Gastrocnemius medialis (tissue), 4 donors: ENCODE measurements at regions of chr4 and their contacts with region 1.

Region 1: DNA sequence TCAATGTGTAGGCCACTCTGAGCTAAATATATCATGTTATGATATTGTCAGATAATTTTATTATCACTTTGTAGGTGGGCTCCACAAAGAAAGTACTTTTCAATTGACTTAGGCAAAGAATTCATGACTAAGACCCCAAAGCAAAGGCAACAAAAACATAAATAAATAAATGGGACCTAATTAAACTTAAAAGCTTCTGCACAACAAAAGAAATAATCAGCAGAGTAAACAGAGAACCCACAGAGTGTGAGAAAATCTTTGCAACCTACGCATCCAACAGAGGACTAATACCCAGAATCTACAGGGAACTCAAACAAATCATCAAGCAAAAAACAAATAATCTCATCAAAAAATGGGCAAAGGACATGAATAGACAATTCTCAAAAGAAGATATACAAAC is 15.2 kb upstream of the PDLIM5 start:
- DNase-seq: no peak
- ATAC-seq: no peak
- H3K4me3 ChIP-seq: no peak overlapping the region
- H3K27ac ChIP-seq: no peak overlapping the region
- H3K4me1 ChIP-seq: peaks cover 0 to 1% of the 10 kb centered on the region in 2 donors
- H3K27me3 ChIP-seq: no peaks in the 10 kb centered on the region
- CTCF ChIP-seq: no peak
- POLR2A ChIP-seq: no peak

Region 2: DNA sequence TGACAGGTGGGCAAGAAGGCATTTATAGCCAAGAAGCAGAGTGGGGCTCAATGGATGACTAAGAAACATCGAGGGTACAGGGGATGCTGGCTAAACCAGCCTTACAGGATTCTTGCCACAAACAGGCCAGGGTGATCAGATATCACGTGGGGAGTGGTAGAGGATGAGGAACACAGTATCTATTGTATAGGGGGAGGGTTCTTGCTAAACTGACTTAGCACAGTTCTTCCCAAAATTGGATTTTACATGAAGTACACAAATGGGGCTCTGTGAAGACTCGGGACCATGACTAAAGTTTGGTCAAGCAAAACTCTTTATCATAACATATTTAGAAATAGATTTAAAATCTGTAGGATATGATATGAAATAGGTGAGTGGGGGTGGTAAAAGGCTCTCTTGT is 751.9 kb before region 1 on chr4:
- in situ Hi-C with region 1: no loop called
- intact Hi-C with region 1: no loop called
- DNase-seq: no peak
- ATAC-seq: no peak
- H3K4me3 ChIP-seq: no peak overlapping the region
- H3K27ac ChIP-seq: no peak overlapping the region
- H3K4me1 ChIP-seq: no peaks in the 10 kb centered on the region
- H3K27me3 ChIP-seq: no peaks in the 10 kb centered on the region
- CTCF ChIP-seq: no peak
- POLR2A ChIP-seq: no peak

Region 3: DNA sequence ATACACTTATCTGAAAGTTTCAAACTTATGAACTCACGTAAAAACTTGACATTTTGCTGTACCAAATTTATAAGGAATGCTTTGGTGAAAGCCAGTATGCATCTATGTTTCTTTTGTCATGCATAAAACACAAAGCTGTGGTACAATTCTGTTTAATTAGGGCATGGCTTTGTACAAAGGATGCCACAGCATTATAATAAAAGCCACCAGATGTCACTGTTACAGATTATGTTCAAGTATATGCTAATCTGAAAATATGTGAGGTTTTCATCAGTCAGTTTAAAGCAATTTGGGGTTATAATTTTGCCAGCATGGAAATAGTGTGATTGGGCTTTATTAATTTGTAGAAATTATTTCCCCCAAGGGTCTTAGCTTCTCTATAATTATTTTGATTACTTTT is 539.0 kb before region 1 on chr4:
- in situ Hi-C with region 1: no loop called
- intact Hi-C with region 1: no loop called
- DNase-seq: no peak
- ATAC-seq: no peak
- H3K4me3 ChIP-seq: no peak overlapping the region
- H3K27ac ChIP-seq: no peak overlapping the region
- H3K4me1 ChIP-seq: no peaks in the 10 kb centered on the region
- H3K27me3 ChIP-seq: no peaks in the 10 kb centered on the region
- CTCF ChIP-seq: no peak
- POLR2A ChIP-seq: no peak

Region 4: GRCh38 chr4:94419956-94420355 is 16.6 kb before region 1 on chr4:
- in situ Hi-C with region 1: no loop called
- intact Hi-C with region 1: loop called (anchors 2 kb)
- DNase-seq: no peak
- ATAC-seq: peak; percentile 94 to 97
- H3K4me3 ChIP-seq: no peak overlapping the region
- H3K27ac ChIP-seq: peak overlapping the region; percentile 33 to 58 (median 45)
- H3K4me1 ChIP-seq: peaks cover 6 to 19% of the 10 kb centered on the region in 2 donors
- H3K27me3 ChIP-seq: no peaks in the 10 kb centered on the region
- CTCF ChIP-seq: no peak
- POLR2A ChIP-seq: no peak